ENCODE measurements at regions of chr1 and their contacts with region 1.

Region 1: GRCh38 chr1:156728597-156729462 is at the start of gene ISG20L2:
- H3K4me3 Mint-ChIP-seq: no peak within 1 kb of the TSS
- H3K27ac Mint-ChIP-seq: no peak within 1 kb of the TSS
- H3K4me1 Mint-ChIP-seq: peaks cover 23% of the 10 kb centered on the region
- H3K27me3 Mint-ChIP-seq: no peaks in the 10 kb centered on the region

Region 2: DNA sequence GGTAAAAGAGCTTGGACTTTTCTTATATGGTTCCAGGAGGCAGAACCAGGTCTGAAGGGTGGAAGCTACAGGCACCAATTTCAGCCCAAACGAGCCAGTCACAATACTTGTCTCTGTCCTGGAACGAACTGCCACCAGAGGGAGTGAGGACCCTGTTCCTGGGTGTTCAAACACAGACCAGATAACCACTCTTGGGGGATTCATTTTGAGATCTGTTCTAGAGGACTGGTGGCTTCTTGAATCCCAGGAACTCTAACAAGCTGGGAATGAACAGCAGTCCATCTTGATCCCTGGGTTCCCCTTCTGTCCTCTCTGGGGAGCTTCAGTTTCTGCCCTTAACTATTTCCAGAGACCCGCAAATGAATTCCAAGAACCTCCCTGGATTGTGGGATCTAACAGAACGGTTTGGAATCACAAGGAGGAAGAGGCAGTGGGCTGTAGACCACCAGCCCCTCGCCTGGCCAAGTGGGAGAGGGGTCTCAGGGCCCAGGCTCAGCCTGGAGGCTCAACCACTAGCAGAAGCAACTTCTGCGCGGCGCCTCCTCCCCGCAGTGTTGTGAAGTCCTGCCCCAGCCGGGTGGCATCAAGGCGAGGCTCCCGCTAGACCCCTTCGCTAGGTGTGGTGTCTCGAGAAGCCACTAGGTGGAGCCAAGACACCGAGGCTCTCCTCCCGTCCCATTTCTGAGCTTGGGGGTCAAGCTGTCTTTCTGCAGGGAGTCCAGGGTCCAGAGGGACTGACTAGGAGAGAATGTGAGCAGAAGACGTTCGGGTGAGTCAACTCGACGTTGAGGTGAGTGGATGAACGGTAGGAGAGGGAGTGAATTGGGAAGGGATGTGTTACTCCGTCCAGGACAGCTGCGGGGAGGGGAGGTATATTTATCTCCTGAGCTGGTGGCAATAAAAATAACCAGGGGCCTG is 39.5 kb before region 1 on chr1:
- intact Hi-C with region 1: loop called (anchors 1 kb)
- H3K4me3 Mint-ChIP-seq: no peak overlapping the region
- H3K27ac Mint-ChIP-seq: no peak overlapping the region
- H3K4me1 Mint-ChIP-seq: peaks cover 41% of the 10 kb centered on the region
- H3K27me3 Mint-ChIP-seq: peaks cover 82% of the 10 kb centered on the region

Region 3: DNA sequence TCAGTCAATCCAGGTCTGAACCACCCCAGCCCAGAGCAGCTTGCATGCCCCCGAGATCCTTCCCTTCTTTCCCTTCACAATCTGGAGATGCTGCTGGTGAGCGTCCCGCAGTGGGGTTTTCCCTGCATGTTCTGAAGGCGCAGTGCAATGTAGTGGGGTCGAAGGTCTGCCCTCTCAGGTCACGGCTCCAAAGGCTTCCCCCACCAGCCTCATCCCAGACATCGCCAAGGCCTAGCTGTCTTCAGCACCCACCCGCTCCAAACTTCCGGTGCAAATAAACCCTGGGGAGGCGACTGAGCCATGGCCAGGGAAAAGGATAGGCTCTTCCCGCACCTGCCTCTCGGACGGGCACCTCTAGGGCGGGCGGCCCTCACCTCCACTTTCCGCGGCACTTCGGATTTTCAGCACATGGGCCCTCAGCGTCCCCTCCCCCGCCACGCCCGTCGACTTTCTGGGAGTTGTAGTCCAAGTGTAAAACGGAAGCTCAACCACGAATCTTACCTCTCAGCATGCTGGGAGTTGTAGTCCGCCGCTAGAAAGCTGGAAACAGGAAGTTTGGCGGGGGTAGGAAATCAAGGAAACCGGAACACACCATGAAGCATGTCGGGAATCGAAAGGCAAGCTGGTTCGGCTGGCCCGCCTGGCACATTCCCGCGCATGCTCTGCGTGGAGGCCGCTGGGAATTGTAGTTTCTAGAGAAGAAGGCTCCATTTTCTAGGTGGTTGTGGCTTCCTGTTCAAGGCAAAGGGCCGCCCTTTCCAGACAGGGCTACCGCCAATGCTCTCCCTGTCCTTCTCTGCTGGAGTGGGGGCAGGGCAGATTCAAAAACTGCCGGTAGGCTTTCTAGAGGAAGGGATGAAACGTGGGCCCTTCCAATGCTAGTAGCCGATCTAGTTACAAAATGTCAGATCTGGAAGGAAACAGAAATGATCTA is 12.1 kb after region 1 on chr1 and contains the start of gene MRPL24:
- intact Hi-C with region 1: loop called (anchors 1 kb)
- H3K4me3 Mint-ChIP-seq: peak within 1 kb of the TSS; percentile 98
- H3K27ac Mint-ChIP-seq: peak within 1 kb of the TSS; percentile 92
- H3K4me1 Mint-ChIP-seq: peaks cover 51% of the 10 kb centered on the region
- H3K27me3 Mint-ChIP-seq: no peaks in the 10 kb centered on the region

Region 4: DNA sequence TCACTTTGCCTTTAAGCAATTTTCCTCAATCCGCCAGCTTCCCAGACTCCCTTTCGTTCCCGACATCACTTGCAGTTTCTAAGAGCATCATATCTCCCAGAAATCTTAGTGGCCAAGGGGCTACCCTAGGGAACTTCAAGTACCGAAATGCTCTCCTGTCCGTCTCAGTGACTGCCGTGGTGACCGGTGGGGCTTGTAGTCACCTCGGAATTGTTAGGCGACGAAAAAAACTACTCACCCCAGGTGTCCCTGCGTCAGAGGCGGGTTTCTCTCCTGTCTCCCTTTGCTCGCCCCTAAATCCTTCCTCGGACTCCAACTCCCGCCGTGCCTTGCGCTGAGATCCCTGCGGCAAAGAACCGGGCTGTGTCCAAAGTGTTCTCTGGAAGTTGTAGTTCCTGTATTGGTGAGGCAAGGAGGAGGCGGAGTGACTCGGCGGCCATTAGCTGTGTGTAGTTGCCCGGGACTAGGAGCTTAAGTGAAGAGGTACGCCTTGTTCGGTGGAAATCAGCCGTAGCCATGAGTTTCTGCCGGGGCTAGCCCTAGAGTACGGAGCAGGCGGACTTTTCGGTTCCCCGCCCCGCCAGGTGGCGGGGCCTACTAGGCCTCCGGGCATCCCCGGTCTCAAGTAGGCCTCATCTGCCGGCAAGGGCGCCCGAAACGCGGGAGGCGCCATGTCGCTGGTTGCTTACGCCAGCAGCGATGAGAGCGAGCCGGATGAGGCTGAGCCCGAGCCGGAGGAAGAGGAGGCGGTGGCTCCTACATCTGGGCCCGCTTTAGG is 38.5 kb after region 1 on chr1 and contains the start of gene PRCC:
- intact Hi-C with region 1: loop called (anchors 1 kb)
- H3K4me3 Mint-ChIP-seq: no peak within 1 kb of the TSS
- H3K27ac Mint-ChIP-seq: no peak within 1 kb of the TSS
- H3K4me1 Mint-ChIP-seq: peaks cover 53% of the 10 kb centered on the region
- H3K27me3 Mint-ChIP-seq: no peaks in the 10 kb centered on the region

Region 5: DNA sequence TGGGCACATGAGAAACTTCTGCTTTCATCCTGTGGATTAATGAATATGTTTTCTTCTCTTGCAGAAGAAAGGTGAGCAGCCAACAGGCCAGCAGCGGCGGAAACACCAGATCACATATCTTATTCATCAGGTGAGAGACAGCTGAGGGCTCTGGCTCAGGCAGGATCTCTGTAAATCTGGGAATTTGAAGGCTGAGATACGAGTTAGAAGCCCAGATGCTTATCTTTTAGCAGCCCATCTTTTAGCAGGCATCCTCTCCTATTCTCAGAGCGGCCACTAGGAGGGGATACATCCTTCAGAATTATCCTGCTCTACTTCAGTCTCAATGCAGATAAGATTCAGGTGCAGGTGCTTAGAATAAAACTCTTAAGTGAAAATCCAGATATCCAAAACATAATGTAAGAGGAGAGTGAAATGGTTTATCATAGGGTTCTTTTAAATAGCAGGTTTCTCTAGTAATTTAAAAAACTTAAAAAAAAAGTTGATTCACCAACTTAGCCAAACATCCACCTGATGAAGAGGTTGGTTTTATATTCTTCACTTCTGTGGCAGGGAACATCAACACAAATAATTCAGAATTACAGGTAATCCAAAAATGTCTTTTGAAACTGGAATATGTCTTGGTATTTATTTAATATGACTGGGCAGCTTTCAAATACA is 68.5 kb after region 1 on chr1:
- intact Hi-C with region 1: no loop called
- H3K4me3 Mint-ChIP-seq: no peak overlapping the region
- H3K27ac Mint-ChIP-seq: no peak overlapping the region
- H3K4me1 Mint-ChIP-seq: peaks cover 14% of the 10 kb centered on the region
- H3K27me3 Mint-ChIP-seq: no peaks in the 10 kb centered on the region

Region 6: GRCh38 chr1:156892190-156893047 is 163.6 kb after region 1 on chr1:
- intact Hi-C with region 1: loop called (anchors 1 kb)
- H3K4me3 Mint-ChIP-seq: peak overlapping the region; percentile 60
- H3K27ac Mint-ChIP-seq: no peak overlapping the region
- H3K4me1 Mint-ChIP-seq: peaks cover 10% of the 10 kb centered on the region
- H3K27me3 Mint-ChIP-seq: peaks cover 79% of the 10 kb centered on the region

Region 7: GRCh38 chr1:156936721-156937220 is 207.9 kb after region 1 on chr1:
- intact Hi-C with region 1: no loop called
- H3K4me3 Mint-ChIP-seq: no peak overlapping the region
- H3K27ac Mint-ChIP-seq: no peak overlapping the region
- H3K4me1 Mint-ChIP-seq: peaks cover 6% of the 10 kb centered on the region
- H3K27me3 Mint-ChIP-seq: no peaks in the 10 kb centered on the region